ENCODE measurements at regions of chr1 and their contacts with region 1.

Region 1: DNA sequence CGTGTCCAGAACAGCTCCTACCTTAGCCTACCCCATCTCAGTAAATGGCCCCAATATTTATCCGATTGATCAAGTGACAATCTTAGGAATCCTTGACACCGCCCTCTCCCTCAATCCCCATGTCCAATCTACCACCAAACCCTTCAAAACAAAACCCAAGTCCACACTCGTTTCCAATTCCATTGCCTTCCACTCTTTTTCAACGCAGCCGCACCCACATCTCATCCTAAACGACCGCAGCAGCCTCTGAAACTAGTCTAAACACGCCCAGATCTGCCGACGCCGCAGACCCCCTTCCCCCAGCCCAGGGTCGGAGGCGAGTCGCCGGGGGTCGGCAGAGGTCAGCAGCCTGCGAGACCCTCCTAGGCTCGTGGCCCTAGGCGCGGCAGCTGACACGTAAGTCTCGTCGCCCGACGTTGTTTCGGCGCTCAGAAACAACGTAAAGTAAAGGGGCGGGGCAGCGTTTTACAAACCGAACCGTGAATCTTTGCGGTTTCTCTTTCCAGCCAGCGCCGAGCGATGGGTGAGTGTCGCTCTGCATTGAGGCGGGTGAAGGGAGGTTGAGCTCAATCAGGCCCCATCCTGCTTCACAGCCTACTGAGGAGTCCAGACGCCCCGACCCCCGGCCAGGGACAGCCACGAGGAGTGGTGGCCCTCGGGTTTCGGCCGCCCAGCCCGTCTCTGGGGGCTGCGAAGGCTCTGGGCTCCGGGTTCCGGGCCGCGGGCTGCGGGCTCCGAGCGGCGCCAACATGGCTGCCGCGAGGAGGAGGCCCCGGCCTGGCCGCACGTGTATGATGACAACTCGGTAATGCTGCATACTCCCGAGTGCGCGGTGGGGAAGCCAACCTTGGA is at the start of gene RPS8:
- DNase-seq: peak; percentile 92
- CTCF ChIP-seq: no peak

Region 2: DNA sequence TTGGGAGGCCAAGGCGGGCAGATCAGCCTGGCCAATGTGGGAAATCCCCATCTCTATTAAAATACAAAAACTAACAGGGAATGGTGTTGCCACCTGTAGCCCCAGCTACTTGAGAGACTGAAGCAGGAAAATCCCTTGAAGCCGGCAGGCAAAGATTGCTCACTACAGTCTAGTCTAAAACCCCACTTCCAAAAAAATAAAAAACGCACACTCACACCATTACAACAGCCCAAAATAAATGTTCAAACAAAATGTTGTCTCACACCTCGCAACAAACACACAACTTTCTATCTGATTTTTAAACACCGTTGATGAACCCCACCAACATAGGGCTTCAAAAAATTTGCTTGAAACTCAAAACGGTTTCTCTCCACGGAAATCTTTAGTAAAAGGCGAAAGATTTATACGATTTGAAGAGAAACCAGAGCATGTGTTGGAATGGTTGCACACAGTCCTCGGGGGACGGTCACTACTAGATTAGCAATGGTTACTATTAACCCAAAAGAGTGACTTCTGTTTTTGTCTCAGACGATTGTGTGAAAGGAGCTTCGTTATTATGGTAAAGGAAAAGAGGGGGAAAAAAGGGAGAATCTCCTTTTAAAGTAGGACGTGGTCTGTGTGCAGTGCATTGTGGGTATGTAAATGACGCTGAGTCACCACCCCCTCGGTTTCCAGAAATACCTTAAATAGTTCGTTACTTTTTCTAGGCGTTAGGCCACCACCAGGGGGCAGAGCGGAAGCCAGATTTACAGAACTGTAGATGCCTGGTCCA is 44.4 kb before region 1 on chr1 and contains the start of gene RNU5D-1:
- CTCF ChIA-PET with region 1: interaction called, 13 read pairs
- POLR2A ChIA-PET with region 1: interaction called, 6 read pairs
- DNase-seq: peak; percentile 87
- CTCF ChIP-seq: peak; percentile 81

Region 3: GRCh38 chr1:44786138-44786840 is 11.0 kb after region 1 on chr1:
- CTCF ChIA-PET with region 1: interaction called, 8 read pairs
- POLR2A ChIA-PET with region 1: interaction called, 12 read pairs
- DNase-seq: peak; percentile 80
- CTCF ChIP-seq: peak; percentile 91

Region 4: GRCh38 chr1:44792783-44793714 is 17.7 kb after region 1 on chr1:
- CTCF ChIA-PET with region 1: interaction called, 8 read pairs
- POLR2A ChIA-PET with region 1: interaction called, 12 read pairs
- DNase-seq: no peak
- CTCF ChIP-seq: no peak

Region 5: DNA sequence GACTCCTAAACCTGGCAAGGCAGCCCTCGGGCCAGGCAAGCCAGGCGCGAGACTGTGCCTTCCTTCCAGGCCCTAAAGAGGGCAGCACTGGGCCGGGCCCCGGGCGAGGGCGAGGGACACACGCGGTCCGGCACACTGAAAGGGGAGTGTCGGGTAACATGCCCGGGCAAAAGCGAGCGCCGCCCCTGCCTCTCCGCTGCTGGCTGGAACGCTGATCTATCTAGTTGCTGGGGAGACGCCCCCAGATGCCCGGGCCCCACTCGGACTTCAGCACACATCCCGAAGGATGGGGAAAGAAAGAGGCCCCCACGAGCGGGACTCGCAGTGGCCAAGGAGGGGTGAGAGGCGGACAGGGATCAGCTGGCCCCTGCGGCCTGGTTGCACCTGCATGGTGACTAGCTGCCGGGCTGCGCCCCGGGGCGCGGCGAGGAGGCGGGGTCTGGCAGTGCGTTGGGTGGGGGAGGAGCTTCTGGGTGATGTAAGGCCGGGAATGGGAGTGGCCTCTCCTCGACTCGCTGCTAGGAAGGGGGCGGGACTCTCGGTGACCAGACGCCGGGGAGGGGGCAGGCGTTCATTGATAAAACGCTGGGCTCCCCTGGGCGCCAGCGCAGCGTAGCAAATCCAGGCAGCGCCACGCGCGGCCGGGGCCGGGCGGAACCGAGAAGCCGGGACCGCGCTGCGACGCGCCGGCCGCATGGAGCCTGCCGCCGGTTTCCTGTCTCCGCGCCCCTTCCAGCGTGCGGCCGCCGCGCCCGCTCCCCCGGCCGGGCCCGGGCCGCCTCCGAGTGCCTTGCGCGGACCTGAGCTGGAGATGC is 24.7 kb after region 1 on chr1 and contains the start of gene PLK3:
- CTCF ChIA-PET with region 1: interaction called, 11 read pairs
- POLR2A ChIA-PET with region 1: interaction called, 11 read pairs
- DNase-seq: peak; percentile 99
- CTCF ChIP-seq: peak; percentile 94

Region 6: GRCh38 chr1:44807262-44808062 is 32.2 kb after region 1 on chr1 and contains the start of gene DYNLT4:
- CTCF ChIA-PET with region 1: no interaction called
- POLR2A ChIA-PET with region 1: interaction called, 10 read pairs
- DNase-seq: peak; percentile 74
- CTCF ChIP-seq: no peak